ENCODE measurements at regions of chr13 and their contacts with region 1.

Region 1: GRCh38 chr13:95644601-95645052 is at the start of gene DZIP1:
- DNase-seq: no peak
- H3K4me3 Mint-ChIP-seq: peak within 1 kb of the TSS; percentile 64
- H3K27ac Mint-ChIP-seq: no peak within 1 kb of the TSS
- H3K4me1 Mint-ChIP-seq: peaks cover 4% of the 10 kb centered on the region
- H3K27me3 Mint-ChIP-seq: peaks cover 55% of the 10 kb centered on the region
- total RNA-seq, gene DZIP1: 0.48 and 0.64 TPM in 2 replicates

Region 2: DNA sequence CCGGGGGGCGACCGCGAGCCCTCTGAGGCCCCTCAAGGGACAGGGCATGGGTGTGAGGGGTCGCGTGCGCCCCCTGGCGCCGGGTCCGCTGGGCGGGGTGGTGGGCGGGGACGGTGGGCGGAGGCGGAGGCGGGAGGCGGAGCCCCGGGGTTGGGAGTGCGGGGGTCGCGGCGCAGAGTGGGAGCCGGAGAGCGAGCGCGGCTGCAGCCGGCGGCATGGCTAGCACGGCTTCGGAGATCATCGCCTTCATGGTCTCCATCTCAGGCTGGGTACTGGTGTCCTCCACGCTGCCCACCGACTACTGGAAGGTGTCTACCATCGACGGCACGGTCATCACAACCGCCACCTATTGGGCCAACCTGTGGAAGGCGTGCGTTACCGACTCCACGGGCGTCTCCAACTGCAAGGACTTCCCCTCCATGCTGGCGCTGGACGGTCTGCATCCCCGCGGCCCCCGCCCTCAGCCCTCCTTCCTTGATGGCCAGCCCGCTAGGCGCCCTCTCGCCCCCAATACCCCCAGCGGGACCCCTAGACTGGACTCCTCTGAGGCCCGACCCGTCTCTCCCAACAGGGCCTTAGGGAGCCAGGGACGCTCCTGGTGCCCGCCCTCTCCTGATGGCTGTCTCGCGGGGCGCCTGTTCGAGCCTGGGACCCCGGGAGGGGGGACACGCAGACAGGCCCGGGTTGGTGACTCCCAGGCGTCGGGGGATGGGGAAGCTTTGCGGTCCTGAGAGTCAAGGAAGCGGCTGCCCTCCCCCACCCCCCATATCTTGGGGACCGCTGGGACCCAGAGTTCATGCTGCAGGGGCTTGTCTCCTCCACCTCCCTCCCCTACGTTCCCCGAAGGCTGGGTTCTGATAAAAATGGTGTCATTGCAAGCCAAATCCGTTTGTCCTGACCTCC is 91.8 kb before region 1 on chr13 and contains the start of gene CLDN10:
- intact Hi-C with region 1: loop called (anchors 5 kb)
- DNase-seq: no peak
- H3K4me3 Mint-ChIP-seq: no peak within 1 kb of the TSS
- H3K27ac Mint-ChIP-seq: no peak within 1 kb of the TSS
- H3K4me1 Mint-ChIP-seq: peaks cover 7% of the 10 kb centered on the region
- H3K27me3 Mint-ChIP-seq: peaks cover 56% of the 10 kb centered on the region
- total RNA-seq, gene CLDN10: not detected in 2 replicates

Region 3: GRCh38 chr13:95752677-95753076 is 108.0 kb after region 1 on chr13:
- intact Hi-C with region 1: no loop called
- DNase-seq: no peak
- H3K4me3 Mint-ChIP-seq: no peak overlapping the region
- H3K27ac Mint-ChIP-seq: no peak overlapping the region
- H3K4me1 Mint-ChIP-seq: peaks cover 4% of the 10 kb centered on the region
- H3K27me3 Mint-ChIP-seq: no peaks in the 10 kb centered on the region

Region 4: DNA sequence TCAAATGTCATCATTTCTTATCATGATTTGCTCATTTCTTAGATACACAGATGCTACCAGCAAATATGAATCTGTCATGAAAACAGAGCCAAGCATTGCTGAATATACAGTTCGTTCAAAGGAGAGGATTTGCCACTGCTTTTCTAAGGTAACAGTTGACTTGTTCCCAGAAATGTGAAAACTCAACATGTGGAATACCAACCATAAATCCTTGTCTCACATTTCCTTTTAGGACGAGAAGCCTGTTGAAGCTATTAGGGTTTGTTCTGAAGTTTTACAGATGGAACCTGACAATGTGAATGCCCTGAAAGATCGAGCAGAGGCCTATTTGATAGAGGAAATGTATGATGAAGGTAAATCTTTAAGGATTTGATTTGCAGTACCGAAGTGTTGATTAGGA is 119.0 kb after region 1 on chr13:
- intact Hi-C with region 1: no loop called
- DNase-seq: no peak
- H3K4me3 Mint-ChIP-seq: no peak overlapping the region
- H3K27ac Mint-ChIP-seq: no peak overlapping the region
- H3K4me1 Mint-ChIP-seq: no peaks in the 10 kb centered on the region
- H3K27me3 Mint-ChIP-seq: no peaks in the 10 kb centered on the region

Region 5: DNA sequence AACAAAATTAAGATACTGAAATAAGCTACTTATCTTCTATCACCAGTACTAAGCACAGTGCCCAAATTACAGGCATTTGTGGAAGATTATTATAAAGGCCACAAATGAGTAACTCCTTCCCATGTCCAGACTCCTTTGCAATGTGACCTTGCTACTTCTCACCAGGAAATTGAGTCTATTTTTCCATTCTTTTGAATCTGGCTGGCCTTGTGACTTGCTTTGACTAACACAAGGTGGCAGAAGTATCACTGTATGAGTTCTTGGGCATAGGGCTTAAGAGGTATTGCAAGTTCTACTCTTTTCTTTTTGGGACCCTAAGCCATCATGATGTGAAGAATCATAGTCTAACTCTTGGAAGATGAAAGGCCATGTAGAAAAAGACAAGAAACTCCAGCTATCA is 358.7 kb after region 1 on chr13:
- intact Hi-C with region 1: no loop called
- DNase-seq: no peak
- H3K4me3 Mint-ChIP-seq: no peak overlapping the region
- H3K27ac Mint-ChIP-seq: no peak overlapping the region
- H3K4me1 Mint-ChIP-seq: no peaks in the 10 kb centered on the region
- H3K27me3 Mint-ChIP-seq: no peaks in the 10 kb centered on the region